B cell (primary cell): ENCODE measurements at regions of chr20 and their contacts with region 1.

Region 1: DNA sequence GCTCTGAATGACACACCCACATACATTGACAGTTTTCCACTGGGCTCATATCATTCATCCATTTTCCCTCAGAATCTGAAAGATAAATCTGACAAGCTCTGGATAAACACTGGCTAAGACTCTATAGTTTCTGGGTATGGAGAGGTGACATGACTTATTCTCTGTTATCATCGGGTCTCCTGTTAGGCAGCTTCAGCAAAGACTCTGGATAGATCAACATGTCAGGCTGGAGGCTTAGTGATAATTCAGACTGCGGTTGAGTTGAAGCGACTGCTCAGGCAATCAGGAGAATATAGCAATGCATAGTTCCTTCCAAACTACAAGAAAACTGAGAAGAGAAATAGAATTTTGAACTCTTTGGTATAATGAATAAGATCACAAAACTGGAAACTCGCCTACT is 394.6 kb downstream of the CBLN4 start:
- DNase-seq: no peak
- ATAC-seq: no peak
- H3K4me3 ChIP-seq: no peak overlapping the region
- H3K4me3 Mint-ChIP-seq: no peak overlapping the region
- H3K27ac ChIP-seq: no peak overlapping the region
- H3K27ac Mint-ChIP-seq: no peak overlapping the region
- H3K4me1 ChIP-seq: no peaks in the 10 kb centered on the region
- H3K4me1 Mint-ChIP-seq: no peaks in the 10 kb centered on the region
- H3K27me3 ChIP-seq: no peaks in the 10 kb centered on the region
- H3K27me3 Mint-ChIP-seq: no peaks in the 10 kb centered on the region
- CTCF ChIP-seq: no peak

Region 2: GRCh38 chr20:55565096-55565773 is 45.5 kb before region 1 on chr20:
- CTCF ChIA-PET with region 1: no interaction called
- POLR2A ChIA-PET with region 1: no interaction called
- intact Hi-C with region 1: loop called (anchors 1 kb)
- DNase-seq: no peak
- ATAC-seq: no peak
- H3K4me3 ChIP-seq: no peak overlapping the region
- H3K4me3 Mint-ChIP-seq: no peak overlapping the region
- H3K27ac ChIP-seq: no peak overlapping the region
- H3K27ac Mint-ChIP-seq: no peak overlapping the region
- H3K4me1 ChIP-seq: no peaks in the 10 kb centered on the region
- H3K4me1 Mint-ChIP-seq: no peaks in the 10 kb centered on the region
- H3K27me3 ChIP-seq: no peaks in the 10 kb centered on the region
- H3K27me3 Mint-ChIP-seq: no peaks in the 10 kb centered on the region
- CTCF ChIP-seq: no peak